ENCODE measurements at regions of chr3 and their contacts with region 1.

Region 1: DNA sequence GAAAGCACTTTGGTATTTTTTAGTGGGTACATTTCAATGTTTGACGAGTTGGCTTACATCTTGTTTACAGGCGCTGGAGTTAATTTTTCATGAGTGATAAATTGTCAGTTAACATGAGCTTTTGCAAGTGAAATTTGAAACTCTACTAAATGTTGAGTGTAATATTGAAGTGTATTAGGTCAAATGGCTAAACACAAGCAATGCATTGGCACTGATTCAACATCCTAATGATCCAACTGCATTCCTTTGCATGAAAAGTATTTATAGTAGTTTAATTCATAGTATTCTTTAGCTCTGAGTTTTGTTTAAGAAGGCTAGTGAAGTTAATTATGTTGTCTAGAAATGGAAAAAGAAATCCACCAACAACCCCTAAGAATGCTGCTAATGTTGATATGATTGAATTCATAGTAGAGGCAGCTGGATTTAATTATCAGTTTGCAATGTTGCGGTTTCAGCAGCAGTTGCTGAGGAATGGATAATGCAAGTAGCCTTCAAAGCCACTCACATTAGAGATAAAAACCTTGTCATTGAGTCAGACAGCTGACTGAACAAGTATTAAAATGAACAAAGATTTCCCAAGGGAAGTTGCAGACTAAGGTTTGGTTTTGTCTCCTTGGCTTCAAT is 245.6 kb upstream of the GOLIM4 start:
- DNase-seq: peak; percentile 21
- H3K4me3 Mint-ChIP-seq: no peak overlapping the region
- H3K27ac Mint-ChIP-seq: no peak overlapping the region
- H3K4me1 Mint-ChIP-seq: peaks cover 27% of the 10 kb centered on the region
- H3K27me3 Mint-ChIP-seq: no peaks in the 10 kb centered on the region
- CTCF ChIP-seq: no peak

Region 2: GRCh38 chr3:168364967-168365366 is 23.7 kb after region 1 on chr3:
- CTCF ChIA-PET with region 1: no interaction called
- intact Hi-C with region 1: no loop called
- DNase-seq: no peak
- H3K4me3 Mint-ChIP-seq: no peak overlapping the region
- H3K27ac Mint-ChIP-seq: no peak overlapping the region
- H3K4me1 Mint-ChIP-seq: peaks cover 8% of the 10 kb centered on the region
- H3K27me3 Mint-ChIP-seq: no peaks in the 10 kb centered on the region
- CTCF ChIP-seq: no peak

Region 3: DNA sequence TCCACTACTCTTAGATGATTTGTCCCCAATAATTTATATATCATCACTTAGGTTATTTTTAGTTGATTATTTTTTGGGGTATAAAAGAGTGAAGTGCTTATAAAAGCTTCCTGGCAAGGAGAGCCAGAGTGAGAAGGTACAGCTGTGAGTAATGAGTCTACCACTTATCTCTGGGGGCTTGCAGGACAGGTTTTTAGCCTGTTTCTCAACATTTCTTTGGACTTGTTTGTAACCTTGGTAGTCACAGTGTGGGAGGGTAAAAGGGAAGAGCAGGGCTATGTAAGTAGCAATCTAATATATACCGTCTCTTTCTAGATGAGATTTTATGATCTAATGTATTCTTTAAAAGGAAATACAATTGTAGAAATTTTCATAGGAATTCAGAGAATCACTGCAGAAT is 75.7 kb after region 1 on chr3:
- CTCF ChIA-PET with region 1: no interaction called
- intact Hi-C with region 1: loop called (anchors 5 kb)
- DNase-seq: peak; percentile 78
- H3K4me3 Mint-ChIP-seq: no peak overlapping the region
- H3K27ac Mint-ChIP-seq: peak overlapping the region; percentile 68
- H3K4me1 Mint-ChIP-seq: peaks cover 60% of the 10 kb centered on the region
- H3K27me3 Mint-ChIP-seq: no peaks in the 10 kb centered on the region
- CTCF ChIP-seq: no peak

Measured in Calu3 (cell line).